ENCODE measurements at regions of chr2 and their contacts with region 1.

Region 1: DNA sequence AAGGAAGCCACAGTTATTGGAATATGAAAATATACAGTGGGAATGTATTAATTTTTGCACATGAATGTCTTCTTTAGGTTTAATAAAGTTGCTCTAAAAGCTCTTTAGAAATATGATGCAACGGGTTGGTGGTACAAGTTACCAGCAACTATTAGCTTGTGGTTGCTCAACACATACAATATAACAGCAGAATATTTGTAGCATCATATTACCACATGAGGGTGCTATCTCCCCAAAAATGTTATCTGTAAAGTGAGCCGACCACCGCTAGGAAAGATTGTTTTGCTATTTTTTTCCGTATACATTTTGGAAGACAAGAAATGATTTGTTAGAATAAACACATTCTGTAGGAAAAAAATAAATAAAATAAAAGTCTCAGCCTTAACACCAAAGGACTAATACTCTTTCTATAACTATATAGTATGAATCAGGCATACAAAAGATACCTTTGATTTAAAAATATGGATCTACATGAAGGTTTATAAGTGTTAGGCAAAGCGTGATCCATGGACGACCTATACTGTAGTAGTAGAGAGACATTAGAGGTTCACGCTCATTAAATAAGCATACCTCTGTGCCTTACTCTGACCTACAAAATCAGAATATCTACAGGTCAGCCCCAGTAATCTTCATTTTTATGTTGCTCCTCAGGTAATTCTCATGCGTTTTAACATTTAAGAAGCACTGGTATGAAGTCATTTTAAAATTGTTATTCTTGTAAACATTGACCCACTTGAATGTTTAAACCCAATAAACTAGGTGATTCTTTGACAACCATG is 1110.6 kb upstream of the ACVR2A start:
- DNase-seq: peak; percentile 6
- H3K4me3 ChIP-seq: no peak overlapping the region
- H3K27ac ChIP-seq: no peak overlapping the region
- H3K27me3 ChIP-seq: no peaks in the 10 kb centered on the region
- CTCF ChIP-seq: peak; percentile 53

Region 2: GRCh38 chr2:146461068-146461467 is 273.2 kb before region 1 on chr2:
- CTCF ChIA-PET with region 1: no interaction called
- POLR2A ChIA-PET with region 1: no interaction called
- DNase-seq: no peak
- H3K4me3 ChIP-seq: no peak overlapping the region
- H3K27ac ChIP-seq: no peak overlapping the region
- H3K27me3 ChIP-seq: no peaks in the 10 kb centered on the region
- CTCF ChIP-seq: no peak

Region 3: DNA sequence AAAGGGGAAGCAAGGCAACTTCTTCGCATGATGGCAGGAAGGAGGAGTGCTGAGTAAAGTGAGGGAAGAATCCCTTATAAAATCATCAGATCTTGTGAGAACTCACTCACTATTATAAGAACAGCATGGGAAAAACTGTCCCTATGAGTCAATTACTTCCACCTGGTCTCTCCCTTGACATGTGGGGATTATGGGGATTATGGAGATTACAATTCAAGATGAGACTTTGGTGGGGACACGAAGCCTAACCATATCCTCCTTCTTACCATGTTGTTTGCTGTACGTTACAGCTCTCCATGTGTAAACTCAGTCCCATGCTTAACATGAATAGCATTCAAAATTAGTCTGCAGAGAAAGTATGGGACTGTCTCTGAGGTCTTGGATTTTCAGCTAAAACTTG is 13.8 kb after region 1 on chr2:
- CTCF ChIA-PET with region 1: interaction called, 11 read pairs
- POLR2A ChIA-PET with region 1: no interaction called
- DNase-seq: no peak
- H3K4me3 ChIP-seq: no peak overlapping the region
- H3K27ac ChIP-seq: no peak overlapping the region
- H3K27me3 ChIP-seq: no peaks in the 10 kb centered on the region
- CTCF ChIP-seq: no peak

Measured in AG04450 (cell line).